Activated naive CD4-positive, alpha-beta T cell treated with anti-CD3 and anti-CD28 coated beads, Interleukin-2, amount 10 ng/mL, durations not matched to agents 7 days and 5 days (primary cell): ENCODE measurements at regions of chr16 and their contacts with region 1.

Region 1: DNA sequence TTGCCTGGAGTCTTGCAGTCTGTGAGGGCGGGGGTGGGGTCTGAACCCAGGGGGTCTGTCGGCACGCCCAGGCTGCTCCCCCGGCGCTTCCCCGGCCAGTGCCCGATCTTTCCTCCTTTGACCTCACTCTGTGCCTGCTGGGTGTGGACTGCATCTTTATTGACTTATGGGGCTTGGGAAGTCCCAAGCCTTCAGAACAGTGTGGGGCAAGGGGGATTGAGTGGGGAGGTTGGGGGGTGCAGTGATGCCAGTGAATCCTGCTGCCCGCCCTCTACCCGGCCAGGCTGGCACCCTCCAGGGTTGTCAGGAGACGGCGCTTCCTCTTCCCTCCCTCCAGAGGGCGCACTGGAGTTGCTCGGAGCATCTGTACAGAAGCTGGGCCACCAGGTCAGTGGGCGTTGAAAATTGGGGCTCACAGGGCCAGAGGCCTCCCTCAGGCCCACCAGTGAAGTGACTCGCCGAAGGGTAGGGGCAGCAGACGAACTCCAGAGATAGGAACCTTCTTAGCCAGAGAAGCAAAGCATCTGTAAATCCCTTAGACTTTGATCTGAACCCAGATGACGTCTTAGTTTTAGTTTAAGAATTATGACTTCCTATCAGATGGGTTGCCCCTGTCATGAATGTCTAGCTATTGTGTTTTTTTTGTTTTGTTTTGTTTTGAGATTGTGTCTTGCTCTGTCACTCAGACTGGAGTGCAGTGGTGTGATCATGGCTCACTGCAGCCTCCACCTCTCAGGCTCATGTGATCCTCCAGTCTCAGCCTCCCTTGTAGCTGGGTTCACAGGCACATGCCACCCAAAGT is 184.8 kb upstream of the CIBAR2 start:
- DNase-seq: peak; percentile 69
- H3K4me3 Mint-ChIP-seq: no peak overlapping the region
- H3K27ac Mint-ChIP-seq: no peak overlapping the region
- H3K4me1 Mint-ChIP-seq: no peaks in the 10 kb centered on the region
- H3K27me3 Mint-ChIP-seq: peaks cover 30% of the 10 kb centered on the region

Region 2: GRCh38 chr16:85104821-85105391 is 192.2 kb before region 1 on chr16:
- CTCF ChIA-PET with region 1: no interaction called
- DNase-seq: peak; percentile 58
- H3K4me3 Mint-ChIP-seq: no peak overlapping the region
- H3K27ac Mint-ChIP-seq: peak overlapping the region; percentile 89
- H3K4me1 Mint-ChIP-seq: peaks cover 40% of the 10 kb centered on the region
- H3K27me3 Mint-ChIP-seq: peaks cover 4% of the 10 kb centered on the region

Region 3: GRCh38 chr16:85275533-85276249 is 21.4 kb before region 1 on chr16:
- CTCF ChIA-PET with region 1: interaction called, 11 read pairs
- DNase-seq: peak; percentile 81
- H3K4me3 Mint-ChIP-seq: no peak overlapping the region
- H3K27ac Mint-ChIP-seq: no peak overlapping the region
- H3K4me1 Mint-ChIP-seq: no peaks in the 10 kb centered on the region
- H3K27me3 Mint-ChIP-seq: peaks cover 8% of the 10 kb centered on the region

Region 4: DNA sequence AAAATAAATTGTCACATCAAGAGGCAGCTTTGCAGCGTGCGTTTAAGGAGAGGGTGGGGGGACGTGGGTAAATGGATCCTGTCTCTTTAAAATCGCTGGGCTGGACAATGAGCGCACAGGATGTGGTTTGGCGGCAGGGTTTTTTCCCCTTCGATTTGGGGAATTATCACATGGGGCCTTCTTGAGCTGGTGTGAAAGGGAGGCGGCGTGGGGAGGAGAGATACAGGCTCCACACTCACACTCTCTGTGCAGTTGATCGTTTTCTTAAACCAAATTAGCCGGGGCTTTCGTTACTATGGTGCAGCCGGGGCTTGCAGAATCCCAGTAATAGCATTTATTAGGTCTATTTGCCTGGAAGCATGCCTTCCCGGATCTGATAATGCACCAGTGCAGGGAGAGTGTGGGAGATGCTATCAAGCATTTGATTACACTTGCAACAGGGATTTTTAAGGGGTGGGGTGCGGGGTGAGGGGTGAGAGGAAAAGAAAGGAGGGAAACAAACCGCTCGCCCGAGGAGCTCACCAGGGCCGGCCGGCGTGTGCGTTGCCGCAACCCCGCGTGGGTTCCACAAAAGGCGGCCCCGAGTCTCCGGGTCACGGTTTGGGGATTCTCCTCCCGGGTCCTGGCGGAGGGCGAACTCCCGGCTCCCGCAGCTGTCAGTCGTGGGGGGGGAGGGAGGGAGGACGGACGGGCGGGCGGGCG is 257.2 kb after region 1 on chr16:
- CTCF ChIA-PET with region 1: no interaction called
- DNase-seq: peak; percentile 88
- H3K4me3 Mint-ChIP-seq: peak overlapping the region; percentile 81
- H3K27ac Mint-ChIP-seq: peak overlapping the region; percentile 93
- H3K4me1 Mint-ChIP-seq: peaks cover 39% of the 10 kb centered on the region
- H3K27me3 Mint-ChIP-seq: peaks cover 43% of the 10 kb centered on the region